ENCODE measurements at regions of chr1 and their contacts with region 1.

Region 1: GRCh38 chr1:171245458-171246064 is 2.7 kb upstream of the FMO1 start:
- DNase-seq: no peak
- ATAC-seq: no peak
- H3K4me3 ChIP-seq: no peak overlapping the region
- H3K27ac ChIP-seq: no peak overlapping the region
- H3K4me1 ChIP-seq: no peaks in the 10 kb centered on the region
- H3K27me3 ChIP-seq: no peaks in the 10 kb centered on the region

Region 2: GRCh38 chr1:171403371-171403770 is 157.8 kb after region 1 on chr1:
- intact Hi-C with region 1: loop called in 1 of 2 experiments (anchors 5 kb)
- DNase-seq: peak; percentile 60 to 83
- ATAC-seq: no peak
- H3K4me3 ChIP-seq: no peak overlapping the region
- H3K27ac ChIP-seq: peak overlapping the region; percentile 23 to 72
- H3K4me1 ChIP-seq: no peaks in the 10 kb centered on the region
- H3K27me3 ChIP-seq: no peaks in the 10 kb centered on the region

Measured in aorta (tissue), 5 donors.